Dorsolateral prefrontal cortex (tissue), 120 donors: ENCODE measurements at regions of chr5 and their contacts with region 1.

Region 1: DNA sequence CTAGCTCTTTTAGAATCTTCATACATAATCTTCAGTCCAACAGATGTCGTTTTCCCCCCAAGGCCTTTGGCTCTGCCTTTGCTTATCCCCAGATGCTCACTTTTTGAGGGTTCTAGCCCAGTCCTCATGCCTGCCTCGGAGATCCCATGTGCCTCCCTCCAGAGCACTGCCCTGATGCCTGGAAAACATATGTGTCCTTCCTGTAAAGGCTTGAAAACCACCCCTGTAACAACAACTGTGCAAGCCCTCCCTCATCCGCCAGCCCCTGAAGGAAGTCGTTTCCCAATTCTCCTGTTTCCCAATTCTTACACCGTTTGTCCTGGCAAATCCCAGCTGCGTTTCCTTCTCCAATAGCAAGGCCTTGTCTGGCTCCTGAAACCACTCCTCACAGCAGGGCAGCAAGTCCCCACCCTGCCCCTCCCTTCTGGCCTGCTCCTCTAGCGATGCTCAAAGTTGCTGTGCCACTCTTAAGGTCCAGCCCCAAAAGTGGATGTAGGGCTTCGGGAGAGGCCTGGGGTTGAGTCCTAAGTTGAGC is 52.2 kb downstream of the SLC36A1 start:
- DNase-seq: no peak
- H3K4me3 ChIP-seq: no peak overlapping the region
- H3K27ac ChIP-seq: peak overlapping the region in 1 of 59 donors; percentile 58
- H3K27me3 ChIP-seq: no peaks in the 10 kb centered on the region
- CTCF ChIP-seq: no peak

Region 2: DNA sequence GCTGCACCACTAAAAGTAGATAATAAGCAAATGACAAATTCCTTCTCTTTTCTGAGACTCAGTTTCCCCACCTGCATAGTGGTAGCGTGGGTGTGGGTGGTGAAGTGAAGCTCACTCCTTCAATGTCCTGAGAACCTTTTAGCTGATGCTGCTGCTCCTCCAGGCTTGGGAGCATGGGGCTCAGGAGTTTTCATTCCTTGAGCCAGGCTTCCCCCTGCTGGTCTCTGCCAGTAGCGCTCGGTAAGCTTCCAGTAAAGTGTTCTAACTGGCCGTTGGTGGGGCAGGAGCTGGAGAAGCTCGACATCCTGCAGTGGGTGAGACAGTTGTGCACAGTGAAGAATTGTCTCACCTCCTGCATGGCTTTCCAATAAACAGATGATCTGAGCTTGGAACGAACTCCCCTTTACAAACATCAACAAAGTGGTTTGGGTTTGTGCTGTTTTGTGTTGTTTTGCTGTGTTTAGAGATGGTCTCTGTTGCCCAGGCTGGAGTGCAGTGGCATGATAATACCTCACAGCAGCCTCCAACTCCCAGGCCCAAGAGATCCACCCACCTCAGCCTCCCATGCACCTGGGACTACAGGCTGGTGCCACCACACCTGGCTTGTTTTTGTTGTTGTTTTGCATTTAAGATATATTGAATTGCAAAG is 152.6 kb after region 1 on chr5:
- intact Hi-C with region 1: loop called in 1 of 2 experiments (anchors 5 kb)
- DNase-seq: peak; percentile 67 to 90 (median 84)
- H3K4me3 ChIP-seq: no peak overlapping the region
- H3K27ac ChIP-seq: no peak overlapping the region
- H3K27me3 ChIP-seq: no peaks in the 10 kb centered on the region
- CTCF ChIP-seq: peak; percentile 62 to 93 (median 88)